ENCODE measurements at regions of chr7 and their contacts with region 1.

Region 1: DNA sequence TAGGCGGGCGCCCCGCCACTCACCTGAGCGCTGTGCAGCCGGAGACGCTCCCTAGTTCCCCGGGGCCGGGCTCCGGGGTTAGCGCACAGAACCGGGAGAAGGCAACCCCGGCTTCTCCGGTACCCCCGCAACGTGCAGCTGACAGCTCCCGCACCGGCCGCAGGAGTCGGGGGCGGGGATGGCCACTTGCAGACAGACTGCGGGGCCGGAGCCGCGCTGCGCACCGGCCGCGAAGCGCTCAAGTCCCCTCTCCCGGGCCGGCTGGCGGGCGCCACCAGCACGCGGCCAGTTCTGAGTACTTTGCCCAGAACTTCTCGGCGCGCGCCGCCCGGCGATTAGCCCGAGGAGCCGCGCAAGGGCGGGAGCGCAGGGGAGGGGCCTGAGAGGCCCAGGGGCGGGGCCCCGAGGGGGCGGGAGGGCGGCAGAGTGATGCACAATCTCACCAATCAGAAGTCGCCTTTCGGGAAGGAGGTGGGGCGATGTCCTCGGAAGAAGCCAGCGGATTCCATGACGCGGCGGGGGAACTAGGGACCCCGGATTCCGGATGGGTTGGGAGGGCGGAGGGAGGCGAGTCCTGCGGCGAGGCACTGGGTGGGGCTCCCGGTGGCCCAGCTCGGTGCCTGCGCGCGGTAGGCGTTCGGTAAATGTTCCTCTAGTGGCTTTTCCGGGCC is at the start of gene OSBPL3:
- DNase-seq: peak; percentile 77 to 97
- H3K4me3 ChIP-seq: peak within 1 kb of the TSS; percentile 66 to 94
- H3K27ac ChIP-seq: peak within 1 kb of the TSS; percentile 66 to 83
- H3K4me1 ChIP-seq: peaks cover 0 to 3% of the 10 kb centered on the region in 2 donors
- H3K27me3 ChIP-seq: no peaks in the 10 kb centered on the region
- CTCF ChIP-seq: no peak
- total RNA-seq, gene OSBPL3: 0.96 TPM

Region 2: DNA sequence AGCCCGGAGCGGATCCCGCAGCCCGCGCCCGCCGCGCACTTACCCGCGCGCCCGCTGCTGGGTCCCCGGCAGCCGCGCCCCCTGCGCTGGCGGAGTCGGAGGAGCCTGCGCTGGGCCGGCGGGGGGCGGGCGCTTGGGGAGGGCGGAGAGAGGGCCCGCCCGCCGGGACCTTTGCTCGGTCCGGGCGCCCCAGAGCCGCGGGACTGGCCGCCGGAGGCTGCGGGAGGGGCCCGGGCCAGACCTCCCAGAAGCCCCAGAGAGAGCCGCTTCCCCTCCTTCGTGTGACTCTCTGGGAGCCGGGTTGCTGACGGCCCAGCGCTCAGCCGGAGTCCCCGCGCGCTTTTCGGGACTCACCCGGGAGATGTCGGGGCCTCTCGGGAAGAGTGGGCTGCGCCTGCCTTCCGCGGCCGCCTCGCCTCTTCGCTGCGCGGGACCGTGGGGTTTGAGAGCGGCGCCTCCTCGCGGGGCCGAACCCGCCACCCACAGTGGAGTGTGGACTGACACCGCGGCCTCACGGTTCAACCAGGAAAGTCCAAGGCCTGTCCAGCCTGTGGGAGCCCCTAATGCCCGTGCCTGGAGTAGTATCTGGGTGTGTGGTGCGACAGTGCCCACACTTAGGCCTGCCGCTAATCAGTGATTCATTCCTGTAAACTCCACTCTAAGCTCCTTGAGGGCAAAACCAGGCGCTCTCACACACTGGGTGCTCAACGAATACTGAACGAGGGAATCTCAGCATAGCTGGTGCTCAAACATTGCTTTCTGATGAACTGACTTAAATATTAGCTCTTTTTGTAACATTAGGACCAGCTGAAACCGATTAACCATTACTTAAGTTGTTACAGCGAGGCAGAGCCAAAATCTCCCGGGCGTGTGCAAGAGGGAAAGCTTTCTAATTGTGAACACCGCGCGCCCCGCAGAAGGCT is 222.4 kb before region 1 on chr7 and contains the start of gene GSDME:
- intact Hi-C with region 1: loop called (anchors 2 kb)
- DNase-seq: peak in 1 of 2 donors; percentile 80
- H3K4me3 ChIP-seq: peak within 1 kb of the TSS; percentile 78 to 85
- H3K27ac ChIP-seq: peak within 1 kb of the TSS; percentile 94 to 95
- H3K4me1 ChIP-seq: peaks cover 0 to 4% of the 10 kb centered on the region in 2 donors
- H3K27me3 ChIP-seq: no peaks in the 10 kb centered on the region
- CTCF ChIP-seq: peak in 1 of 3 experiments; percentile 8
- total RNA-seq, gene GSDME: 14.9 TPM

Region 3: GRCh38 chr7:24819916-24820689 is 159.9 kb before region 1 on chr7:
- intact Hi-C with region 1: loop called (anchors 5 kb)
- DNase-seq: peak; percentile 23 to 86
- H3K4me3 ChIP-seq: no peak overlapping the region
- H3K27ac ChIP-seq: no peak overlapping the region
- H3K4me1 ChIP-seq: no peaks in the 10 kb centered on the region
- H3K27me3 ChIP-seq: no peaks in the 10 kb centered on the region
- CTCF ChIP-seq: peak; percentile 66 to 86 (median 77)

Region 4: DNA sequence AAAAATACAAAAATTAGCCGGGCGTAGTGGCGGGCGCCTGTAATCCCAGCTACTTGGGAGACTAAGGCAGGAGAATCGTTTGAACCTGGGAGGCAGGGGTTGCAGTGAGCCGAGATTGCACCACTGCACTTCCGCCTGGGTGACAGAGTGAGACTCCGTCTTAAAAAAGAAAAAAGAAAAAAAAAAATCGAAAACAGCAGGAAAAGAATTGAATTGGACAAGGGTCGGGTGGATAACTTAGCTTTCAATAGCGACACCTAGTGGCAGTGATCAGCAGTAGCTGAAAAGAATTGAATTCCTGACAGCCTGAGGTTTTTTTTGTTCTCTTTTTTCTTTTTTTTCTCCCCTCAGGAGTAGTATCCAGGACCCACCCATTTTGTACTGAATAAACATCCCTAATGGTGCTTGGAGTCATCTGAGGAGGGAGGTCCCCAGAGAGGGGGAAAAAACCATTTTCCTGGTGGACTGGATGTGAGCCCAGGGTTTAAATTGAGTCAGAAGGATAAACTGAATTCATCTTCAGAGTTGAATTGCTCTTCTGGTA is 90.0 kb after region 1 on chr7:
- intact Hi-C with region 1: loop called (anchors 5 kb)
- DNase-seq: peak in 1 of 2 donors; percentile 68
- H3K4me3 ChIP-seq: peak overlapping the region; percentile 32 to 39
- H3K27ac ChIP-seq: no peak overlapping the region
- H3K4me1 ChIP-seq: no peaks in the 10 kb centered on the region
- H3K27me3 ChIP-seq: no peaks in the 10 kb centered on the region
- CTCF ChIP-seq: peak; percentile 66 to 84 (median 82)

Region 5: DNA sequence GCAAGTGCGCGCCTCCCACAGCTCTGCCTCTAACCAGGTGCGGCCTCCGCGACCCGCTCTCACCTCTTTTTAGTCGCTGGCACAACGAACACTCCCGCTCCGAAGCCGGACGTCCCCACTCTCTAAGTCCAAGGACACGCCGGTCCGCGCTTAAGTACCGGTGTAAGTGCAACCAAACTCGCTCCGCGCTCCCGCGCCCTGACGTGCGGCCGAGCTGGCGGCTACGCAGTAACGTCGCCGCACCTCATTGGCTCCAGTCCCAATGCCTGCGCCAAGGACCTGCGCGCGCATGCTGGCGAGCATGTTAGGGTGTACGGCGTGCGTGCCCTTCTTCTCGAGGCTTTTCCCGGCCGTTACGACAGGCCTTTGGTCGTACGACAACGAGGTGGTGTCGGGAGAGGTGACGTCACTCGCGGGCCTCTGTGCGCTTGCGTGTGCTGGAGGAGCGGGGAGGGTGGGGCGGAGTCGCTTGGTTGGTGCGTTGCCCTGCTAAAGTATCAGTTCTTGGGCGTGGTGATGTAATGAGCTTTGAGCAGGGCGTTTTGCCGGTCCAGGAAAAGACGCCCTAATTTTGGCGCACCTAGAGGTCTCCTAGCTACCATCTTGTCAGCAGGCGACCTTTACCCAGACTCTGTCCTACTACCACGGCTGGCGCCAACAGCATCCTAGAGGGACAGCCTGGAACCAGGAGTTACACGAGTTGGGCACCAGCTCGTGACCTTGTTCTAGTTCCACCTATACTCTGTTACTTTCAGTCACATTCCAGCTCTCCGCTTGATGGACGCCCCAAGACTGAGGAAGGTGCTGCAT is 145.3 kb after region 1 on chr7 and contains the start of gene CYCS:
- intact Hi-C with region 1: loop called (anchors 1 kb)
- DNase-seq: peak; percentile 98 to 100
- H3K4me3 ChIP-seq: peak within 1 kb of the TSS; percentile 82 to 100
- H3K27ac ChIP-seq: peak within 1 kb of the TSS; percentile 90 to 99
- H3K4me1 ChIP-seq: peaks cover 0 to 4% of the 10 kb centered on the region in 2 donors
- H3K27me3 ChIP-seq: no peaks in the 10 kb centered on the region
- CTCF ChIP-seq: no peak
- total RNA-seq, gene CYCS: 11.5 TPM

Region 6: DNA sequence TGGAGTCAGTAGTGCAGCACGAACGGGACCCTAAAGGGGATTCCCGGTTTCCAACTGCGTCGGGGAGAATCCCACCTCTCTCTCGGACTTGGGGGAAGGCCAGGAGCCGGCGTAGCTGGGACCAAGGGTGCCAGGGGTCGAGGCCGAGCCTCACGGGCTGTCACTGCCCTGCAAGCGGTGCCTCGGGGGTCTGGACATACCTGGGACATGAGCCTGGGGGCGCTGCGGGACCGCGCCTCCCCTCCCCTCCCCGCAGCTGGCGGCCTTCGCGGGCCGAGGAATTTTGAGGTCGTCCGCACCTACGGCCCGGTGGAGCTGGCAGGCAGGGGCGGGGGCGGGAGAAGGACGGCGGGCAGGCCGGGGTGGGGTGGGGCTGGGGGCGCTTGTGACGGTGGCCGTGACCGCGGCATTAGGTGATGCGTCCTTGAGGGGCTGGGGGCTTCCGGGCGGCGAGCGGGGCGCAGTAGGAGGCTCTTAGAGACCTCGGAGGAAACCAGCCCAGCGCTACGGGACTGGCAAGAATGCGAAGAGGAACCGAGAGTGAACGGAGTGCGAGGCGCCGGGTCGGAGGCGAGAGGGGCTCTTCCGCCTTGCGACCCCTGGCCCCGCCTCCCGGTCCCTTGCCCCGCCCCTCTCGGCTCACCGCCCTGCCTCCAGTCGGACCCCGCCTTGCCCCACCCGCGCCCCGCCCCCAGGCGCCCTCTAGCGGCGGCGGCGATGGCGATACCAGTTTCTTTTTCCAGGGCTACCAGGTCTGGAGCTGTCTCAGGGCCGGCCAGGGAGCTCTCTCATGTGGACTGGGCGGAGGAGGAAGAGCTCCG is 200.0 kb after region 1 on chr7:
- intact Hi-C with region 1: loop called (anchors 5 kb)
- DNase-seq: peak; percentile 58 to 97
- H3K4me3 ChIP-seq: peak overlapping the region; percentile 69 to 74
- H3K27ac ChIP-seq: peak overlapping the region; percentile 78 to 85
- H3K4me1 ChIP-seq: peaks cover 0 to 4% of the 10 kb centered on the region in 2 donors
- H3K27me3 ChIP-seq: no peaks in the 10 kb centered on the region
- CTCF ChIP-seq: peak; percentile 54 to 95 (median 87)